ENCODE measurements at regions of chr11 and their contacts with region 1.

Region 1: GRCh38 chr11:113896156-113896879 is 8.3 kb upstream of the HTR3B start:
- DNase-seq: no peak

Region 2: DNA sequence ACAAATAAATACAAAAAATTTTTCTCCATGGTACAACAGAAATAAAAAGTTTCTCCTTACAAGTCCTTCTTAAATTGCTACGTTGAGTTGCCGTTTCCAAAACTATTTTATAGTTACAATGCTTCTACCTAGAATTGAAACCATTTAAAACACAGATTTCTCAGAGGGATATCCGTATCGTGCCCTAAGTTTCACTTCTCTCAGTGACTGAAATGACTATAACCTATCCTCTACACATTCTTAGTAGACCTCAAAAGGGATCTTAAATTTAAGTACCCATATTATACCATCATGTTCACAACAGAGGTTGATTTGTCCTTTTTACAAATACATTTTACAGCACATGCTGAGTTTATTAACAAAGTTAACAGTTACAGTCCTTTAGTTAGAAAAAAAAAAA is 65.0 kb before region 1 on chr11:
- intact Hi-C with region 1: no loop called
- DNase-seq: no peak

Region 3: GRCh38 chr11:113862435-113862834 is 33.9 kb before region 1 on chr11:
- intact Hi-C with region 1: no loop called
- DNase-seq: no peak

Region 4: GRCh38 chr11:113994077-113994954 is 98.0 kb after region 1 on chr11:
- intact Hi-C with region 1: loop called (anchors 10 kb)
- DNase-seq: no peak

Region 5: DNA sequence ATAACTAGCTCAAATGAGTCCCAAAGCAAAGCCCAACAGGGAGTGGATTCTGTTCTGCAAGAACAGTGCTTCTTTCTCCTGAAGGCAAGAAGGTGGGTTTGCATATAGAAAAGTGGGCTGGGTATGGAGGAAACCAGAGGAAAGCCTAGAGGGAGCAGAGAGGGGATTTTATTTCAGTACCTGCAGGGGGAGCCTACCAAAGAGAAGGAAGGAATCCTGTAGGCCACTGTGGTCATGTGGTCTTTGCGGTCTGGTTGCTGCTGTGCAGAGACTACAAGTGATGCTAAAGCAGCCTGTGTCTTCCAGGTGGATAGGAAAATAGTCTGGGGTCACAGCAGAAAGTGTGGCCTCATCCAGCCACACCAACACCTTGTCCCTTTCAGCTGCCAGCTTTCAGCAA is 130.0 kb after region 1 on chr11:
- intact Hi-C with region 1: loop called (anchors 10 kb)
- DNase-seq: no peak

Measured in cardiac septum (tissue), 1 donor.